Activated CD4-positive, alpha-beta memory T cell treated with anti-CD3 and anti-CD28 coated beads, Interleukin-2, amount 10 ng/mL, durations not matched to agents 7 days and 5 days (primary cell): ENCODE measurements at regions of chr5 and their contacts with region 1.

Region 1: GRCh38 chr5:159341914-159342313 is 11.6 kb upstream of the IL12B start:
- DNase-seq: peak; percentile 78
- H3K4me3 Mint-ChIP-seq: no peak overlapping the region
- H3K27ac Mint-ChIP-seq: peak overlapping the region; percentile 87
- H3K4me1 Mint-ChIP-seq: peaks cover 85% of the 10 kb centered on the region
- H3K27me3 Mint-ChIP-seq: peaks cover 1% of the 10 kb centered on the region

Region 2: GRCh38 chr5:159331093-159331973 is 10.6 kb before region 1 on chr5:
- CTCF ChIA-PET with region 1: interaction called, 21 read pairs
- POLR2A ChIA-PET with region 1: interaction called, 9 read pairs
- DNase-seq: peak; percentile 83
- H3K4me3 Mint-ChIP-seq: peak overlapping the region; percentile 76
- H3K27ac Mint-ChIP-seq: peak overlapping the region; percentile 65
- H3K4me1 Mint-ChIP-seq: peaks cover 53% of the 10 kb centered on the region
- H3K27me3 Mint-ChIP-seq: peaks cover 30% of the 10 kb centered on the region

Region 3: GRCh38 chr5:159531554-159532105 is 189.7 kb after region 1 on chr5:
- CTCF ChIA-PET with region 1: no interaction called
- POLR2A ChIA-PET with region 1: no interaction called
- DNase-seq: no peak
- H3K4me3 Mint-ChIP-seq: no peak overlapping the region
- H3K27ac Mint-ChIP-seq: no peak overlapping the region
- H3K4me1 Mint-ChIP-seq: peaks cover 2% of the 10 kb centered on the region
- H3K27me3 Mint-ChIP-seq: no peaks in the 10 kb centered on the region